Naive thymus-derived CD4-positive, alpha-beta T cell (primary cell): ENCODE measurements at regions of chr14 and their contacts with region 1.

Region 1: GRCh38 chr14:54566410-54567223 is at the start of gene SAMD4A:
- DNase-seq: peak; percentile 32 to 68 (median 53)
- ATAC-seq: peak; percentile 46
- H3K4me3 ChIP-seq: peak within 1 kb of the TSS; percentile 74
- H3K4me3 Mint-ChIP-seq: peak within 1 kb of the TSS; percentile 91 to 97 (median 94)
- H3K27ac ChIP-seq: peak within 1 kb of the TSS; percentile 56
- H3K27ac Mint-ChIP-seq: peak within 1 kb of the TSS in 8 of 9 donors; percentile 28 to 92 (median 66)
- H3K4me1 ChIP-seq: peaks cover 9 to 11% of the 10 kb centered on the region in 2 donors
- H3K4me1 Mint-ChIP-seq: peaks cover 5 to 19% (median 14%) of the 10 kb centered on the region in 7 donors
- H3K27me3 ChIP-seq: peaks cover 0 to 12% of the 10 kb centered on the region in 2 donors
- H3K27me3 Mint-ChIP-seq: peaks cover 0 to 51% (median 6%) of the 10 kb centered on the region in 5 donors
- total RNA-seq, gene SAMD4A: 0.73 to 5.7 (median 1.7) TPM

Region 2: GRCh38 chr14:54440873-54441868 is 125.4 kb before region 1 on chr14 and contains the start of gene CNIH1:
- CTCF ChIA-PET with region 1: no interaction called
- POLR2A ChIA-PET with region 1: no interaction called
- intact Hi-C with region 1: loop called (anchors 1 to 2 kb)
- DNase-seq: peak; percentile 85 to 99 (median 93)
- ATAC-seq: peak; percentile 97
- H3K4me3 ChIP-seq: peak within 1 kb of the TSS; percentile 73
- H3K4me3 Mint-ChIP-seq: peak within 1 kb of the TSS; percentile 85 to 97 (median 94)
- H3K27ac ChIP-seq: peak within 1 kb of the TSS; percentile 80
- H3K27ac Mint-ChIP-seq: peak within 1 kb of the TSS; percentile 87 to 98 (median 95)
- H3K4me1 ChIP-seq: peaks cover 9 to 23% of the 10 kb centered on the region in 2 donors
- H3K4me1 Mint-ChIP-seq: peaks cover 23 to 54% (median 49%) of the 10 kb centered on the region in 7 donors
- H3K27me3 ChIP-seq: no peaks in the 10 kb centered on the region
- H3K27me3 Mint-ChIP-seq: peaks cover 0 to 2% (median 0%) of the 10 kb centered on the region in 5 donors
- total RNA-seq, gene CNIH1: 50.5 to 87.9 (median 57.8) TPM

Region 3: DNA sequence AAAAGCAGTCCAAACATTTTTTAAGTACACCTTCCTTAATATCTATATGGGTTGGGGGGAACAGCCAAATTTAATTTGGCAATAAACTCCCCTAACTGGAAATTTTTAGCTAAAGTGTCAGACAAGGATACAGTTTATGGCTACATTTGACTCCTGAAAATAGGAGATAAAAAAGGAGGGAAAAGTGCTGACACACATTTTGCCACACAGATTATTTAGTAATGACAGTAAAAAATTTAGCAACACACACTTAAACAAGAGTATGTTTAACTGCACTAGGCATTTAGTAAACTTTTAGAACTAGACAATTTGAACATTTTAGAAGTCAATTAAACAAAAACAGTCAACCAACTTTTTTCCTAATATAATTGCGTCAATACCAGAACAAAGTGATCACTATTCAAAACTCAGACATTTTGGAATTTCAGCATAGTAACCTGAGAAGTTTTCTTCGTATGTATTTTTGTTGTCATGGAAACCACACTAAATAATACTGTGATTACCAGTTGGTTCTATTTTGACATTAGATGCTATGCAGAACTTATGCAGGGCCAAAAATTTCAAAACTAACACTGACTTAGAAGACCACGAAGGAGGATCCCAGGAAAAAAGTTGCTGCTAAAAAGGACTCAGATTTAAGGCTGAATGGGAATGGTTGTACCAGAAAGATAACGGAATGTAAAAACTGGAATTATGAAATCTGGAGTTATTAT is 91.3 kb before region 1 on chr14:
- CTCF ChIA-PET with region 1: no interaction called
- POLR2A ChIA-PET with region 1: no interaction called
- intact Hi-C with region 1: no loop called
- DNase-seq: no peak
- ATAC-seq: no peak
- H3K4me3 ChIP-seq: no peak overlapping the region
- H3K4me3 Mint-ChIP-seq: no peak overlapping the region
- H3K27ac ChIP-seq: no peak overlapping the region
- H3K27ac Mint-ChIP-seq: peak overlapping the region in 3 of 9 donors; percentile 34 to 61 (median 46)
- H3K4me1 ChIP-seq: no peaks in the 10 kb centered on the region
- H3K4me1 Mint-ChIP-seq: no peaks in the 10 kb centered on the region
- H3K27me3 ChIP-seq: no peaks in the 10 kb centered on the region
- H3K27me3 Mint-ChIP-seq: no peaks in the 10 kb centered on the region

Region 4: GRCh38 chr14:54537650-54538049 is 29.0 kb before region 1 on chr14:
- CTCF ChIA-PET with region 1: no interaction called
- POLR2A ChIA-PET with region 1: no interaction called
- intact Hi-C with region 1: no loop called
- DNase-seq: no peak
- ATAC-seq: no peak
- H3K4me3 ChIP-seq: no peak overlapping the region
- H3K4me3 Mint-ChIP-seq: no peak overlapping the region
- H3K27ac ChIP-seq: no peak overlapping the region
- H3K27ac Mint-ChIP-seq: no peak overlapping the region
- H3K4me1 ChIP-seq: no peaks in the 10 kb centered on the region
- H3K4me1 Mint-ChIP-seq: peaks cover 0 to 2% (median 0%) of the 10 kb centered on the region in 7 donors
- H3K27me3 ChIP-seq: no peaks in the 10 kb centered on the region
- H3K27me3 Mint-ChIP-seq: no peaks in the 10 kb centered on the region

Region 5: DNA sequence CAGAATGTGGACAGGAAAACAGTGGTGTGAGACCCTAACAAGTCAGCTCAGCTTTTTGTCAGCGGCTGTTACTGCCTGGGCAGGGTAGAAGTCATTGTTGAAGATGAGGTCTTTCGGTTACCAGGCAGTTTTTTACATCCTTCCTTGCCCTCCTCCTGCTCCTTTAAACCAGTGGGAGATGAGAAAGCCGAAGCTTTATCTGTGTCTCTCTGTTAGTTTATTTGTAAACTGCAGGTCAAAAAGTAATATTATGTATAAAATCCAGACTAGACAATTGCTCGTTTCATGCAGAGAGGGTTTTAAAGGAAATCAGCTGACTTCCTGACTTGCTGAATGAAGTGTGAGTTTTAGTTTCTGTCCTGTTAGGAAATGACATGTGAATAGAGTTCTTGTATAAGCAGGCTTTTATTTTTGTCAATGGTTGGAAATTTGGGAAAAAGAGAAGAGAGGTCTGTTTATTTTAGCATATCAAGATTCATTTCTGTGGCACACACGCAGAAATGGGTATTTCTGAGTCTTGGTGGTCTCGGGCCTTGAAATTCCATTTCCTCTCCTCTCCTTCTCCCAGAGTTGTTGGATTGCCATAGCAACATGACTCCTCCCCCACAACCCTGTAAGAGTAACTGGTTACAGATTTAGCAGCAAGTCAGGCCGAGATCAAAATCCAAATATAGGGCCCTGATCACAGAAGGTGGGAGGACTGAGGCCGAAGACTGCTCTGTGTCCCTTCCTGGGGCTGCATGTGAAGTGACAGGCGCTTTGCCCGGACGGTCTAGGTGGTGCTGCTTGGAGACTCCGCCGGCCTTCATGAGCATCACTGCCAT is 61.1 kb after region 1 on chr14:
- CTCF ChIA-PET with region 1: interaction called, 4 read pairs
- POLR2A ChIA-PET with region 1: interaction called, 4 read pairs
- intact Hi-C with region 1: loop called (anchors 1 kb)
- DNase-seq: peak in 7 of 9 donors; percentile 30 to 59 (median 44)
- ATAC-seq: peak; percentile 81
- H3K4me3 ChIP-seq: peak overlapping the region; percentile 14
- H3K4me3 Mint-ChIP-seq: peak overlapping the region; percentile 70 to 87 (median 82)
- H3K27ac ChIP-seq: peak overlapping the region; percentile 67
- H3K27ac Mint-ChIP-seq: peak overlapping the region; percentile 86 to 93 (median 92)
- H3K4me1 ChIP-seq: peaks cover 32 to 39% of the 10 kb centered on the region in 2 donors
- H3K4me1 Mint-ChIP-seq: peaks cover 34 to 51% (median 42%) of the 10 kb centered on the region in 7 donors
- H3K27me3 ChIP-seq: no peaks in the 10 kb centered on the region
- H3K27me3 Mint-ChIP-seq: no peaks in the 10 kb centered on the region

Region 6: GRCh38 chr14:54722781-54723432 is 156.3 kb after region 1 on chr14:
- CTCF ChIA-PET with region 1: interaction called, 4 read pairs
- POLR2A ChIA-PET with region 1: no interaction called
- intact Hi-C with region 1: loop called in 1 of 2 experiments (anchors 1 kb)
- DNase-seq: no peak
- ATAC-seq: no peak
- H3K4me3 ChIP-seq: no peak overlapping the region
- H3K4me3 Mint-ChIP-seq: no peak overlapping the region
- H3K27ac ChIP-seq: no peak overlapping the region
- H3K27ac Mint-ChIP-seq: no peak overlapping the region
- H3K4me1 ChIP-seq: no peaks in the 10 kb centered on the region
- H3K4me1 Mint-ChIP-seq: peaks cover 0 to 9% (median 0%) of the 10 kb centered on the region in 7 donors
- H3K27me3 ChIP-seq: no peaks in the 10 kb centered on the region
- H3K27me3 Mint-ChIP-seq: peaks cover 9 to 53% (median 15%) of the 10 kb centered on the region in 5 donors

Region 7: GRCh38 chr14:54787261-54787660 is 220.6 kb after region 1 on chr14:
- CTCF ChIA-PET with region 1: no interaction called
- POLR2A ChIA-PET with region 1: no interaction called
- intact Hi-C with region 1: no loop called
- DNase-seq: no peak
- ATAC-seq: no peak
- H3K4me3 ChIP-seq: no peak overlapping the region
- H3K4me3 Mint-ChIP-seq: no peak overlapping the region
- H3K27ac ChIP-seq: no peak overlapping the region
- H3K27ac Mint-ChIP-seq: no peak overlapping the region
- H3K4me1 ChIP-seq: no peaks in the 10 kb centered on the region
- H3K4me1 Mint-ChIP-seq: peaks cover 0 to 15% (median 0%) of the 10 kb centered on the region in 7 donors
- H3K27me3 ChIP-seq: no peaks in the 10 kb centered on the region
- H3K27me3 Mint-ChIP-seq: peaks cover 0 to 3% (median 0%) of the 10 kb centered on the region in 5 donors

Region 8: DNA sequence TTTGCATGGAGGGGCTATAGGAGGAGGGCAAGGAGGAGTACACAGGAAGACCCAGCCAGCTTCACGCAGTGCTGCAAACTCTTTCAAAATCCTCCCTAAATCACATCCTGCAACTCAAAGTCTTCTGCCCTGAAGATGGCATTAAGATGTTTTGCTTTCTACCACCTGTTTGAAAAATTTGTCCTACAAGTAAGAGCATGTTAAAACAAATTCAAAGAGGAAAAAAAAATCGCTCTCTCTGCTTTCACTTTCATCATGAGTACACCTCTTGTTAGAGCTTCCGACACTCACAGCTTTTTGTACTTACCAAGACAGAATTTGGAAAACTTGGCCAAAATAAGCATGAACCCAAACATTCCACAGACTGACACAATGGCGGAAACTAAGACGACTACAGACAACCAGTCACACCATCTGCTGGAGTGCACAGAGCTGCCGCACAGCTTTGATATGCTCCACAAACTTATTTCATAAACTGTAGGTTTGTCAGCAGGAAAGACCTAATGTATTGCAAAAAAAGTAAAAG is 314.7 kb after region 1 on chr14:
- CTCF ChIA-PET with region 1: interaction called, 4 read pairs
- POLR2A ChIA-PET with region 1: interaction called, 4 read pairs
- intact Hi-C with region 1: loop called (anchors 1 to 5 kb)
- DNase-seq: peak in 7 of 9 donors; percentile 55 to 74 (median 72)
- ATAC-seq: peak; percentile 77
- H3K4me3 ChIP-seq: peak overlapping the region; percentile 70
- H3K4me3 Mint-ChIP-seq: peak overlapping the region; percentile 85 to 97 (median 90)
- H3K27ac ChIP-seq: peak overlapping the region; percentile 79
- H3K27ac Mint-ChIP-seq: peak overlapping the region; percentile 90 to 99 (median 96)
- H3K4me1 ChIP-seq: peaks cover 7 to 17% of the 10 kb centered on the region in 2 donors
- H3K4me1 Mint-ChIP-seq: peaks cover 28 to 66% (median 60%) of the 10 kb centered on the region in 7 donors
- H3K27me3 ChIP-seq: no peaks in the 10 kb centered on the region
- H3K27me3 Mint-ChIP-seq: no peaks in the 10 kb centered on the region

Region 9: GRCh38 chr14:55026793-55027561 is 460.4 kb after region 1 on chr14 and contains the starts of genes SOCS4 and WDHD1:
- CTCF ChIA-PET with region 1: no interaction called
- POLR2A ChIA-PET with region 1: no interaction called
- intact Hi-C with region 1: loop called in 1 of 2 experiments (anchors 1 kb)
- DNase-seq: peak; percentile 93 to 100 (median 96)
- ATAC-seq: peak; percentile 97
- H3K4me3 ChIP-seq: peak within 1 kb of the TSS; percentile 87
- H3K4me3 Mint-ChIP-seq: peak within 1 kb of the TSS; percentile 84 to 96 (median 93)
- H3K27ac ChIP-seq: peak within 1 kb of the TSS; percentile 86
- H3K27ac Mint-ChIP-seq: peak within 1 kb of the TSS; percentile 68 to 96 (median 92)
- H3K4me1 ChIP-seq: peaks cover 12 to 31% of the 10 kb centered on the region in 2 donors
- H3K4me1 Mint-ChIP-seq: peaks cover 26 to 59% (median 53%) of the 10 kb centered on the region in 7 donors
- H3K27me3 ChIP-seq: no peaks in the 10 kb centered on the region
- H3K27me3 Mint-ChIP-seq: no peaks in the 10 kb centered on the region
- total RNA-seq, gene SOCS4: 21.2 to 30.3 (median 22.1) TPM
- total RNA-seq, gene WDHD1: 2.6 to 26.6 (median 3.6) TPM

Region 10: GRCh38 chr14:55430024-55430690 is 863.5 kb after region 1 on chr14:
- CTCF ChIA-PET with region 1: no interaction called
- POLR2A ChIA-PET with region 1: no interaction called
- intact Hi-C with region 1: loop called in 1 of 2 experiments (anchors 5 kb)
- DNase-seq: peak in 7 of 9 donors; percentile 65 to 83 (median 77)
- ATAC-seq: peak; percentile 94
- H3K4me3 ChIP-seq: no peak overlapping the region
- H3K4me3 Mint-ChIP-seq: no peak overlapping the region
- H3K27ac ChIP-seq: peak overlapping the region; percentile 10
- H3K27ac Mint-ChIP-seq: peak overlapping the region in 8 of 9 donors; percentile 2 to 93 (median 70)
- H3K4me1 ChIP-seq: peaks cover 15 to 32% of the 10 kb centered on the region in 2 donors
- H3K4me1 Mint-ChIP-seq: peaks cover 18 to 48% (median 39%) of the 10 kb centered on the region in 7 donors
- H3K27me3 ChIP-seq: no peaks in the 10 kb centered on the region
- H3K27me3 Mint-ChIP-seq: no peaks in the 10 kb centered on the region